ENCODE measurements at regions of chr17 and their contacts with region 1.

Region 1: DNA sequence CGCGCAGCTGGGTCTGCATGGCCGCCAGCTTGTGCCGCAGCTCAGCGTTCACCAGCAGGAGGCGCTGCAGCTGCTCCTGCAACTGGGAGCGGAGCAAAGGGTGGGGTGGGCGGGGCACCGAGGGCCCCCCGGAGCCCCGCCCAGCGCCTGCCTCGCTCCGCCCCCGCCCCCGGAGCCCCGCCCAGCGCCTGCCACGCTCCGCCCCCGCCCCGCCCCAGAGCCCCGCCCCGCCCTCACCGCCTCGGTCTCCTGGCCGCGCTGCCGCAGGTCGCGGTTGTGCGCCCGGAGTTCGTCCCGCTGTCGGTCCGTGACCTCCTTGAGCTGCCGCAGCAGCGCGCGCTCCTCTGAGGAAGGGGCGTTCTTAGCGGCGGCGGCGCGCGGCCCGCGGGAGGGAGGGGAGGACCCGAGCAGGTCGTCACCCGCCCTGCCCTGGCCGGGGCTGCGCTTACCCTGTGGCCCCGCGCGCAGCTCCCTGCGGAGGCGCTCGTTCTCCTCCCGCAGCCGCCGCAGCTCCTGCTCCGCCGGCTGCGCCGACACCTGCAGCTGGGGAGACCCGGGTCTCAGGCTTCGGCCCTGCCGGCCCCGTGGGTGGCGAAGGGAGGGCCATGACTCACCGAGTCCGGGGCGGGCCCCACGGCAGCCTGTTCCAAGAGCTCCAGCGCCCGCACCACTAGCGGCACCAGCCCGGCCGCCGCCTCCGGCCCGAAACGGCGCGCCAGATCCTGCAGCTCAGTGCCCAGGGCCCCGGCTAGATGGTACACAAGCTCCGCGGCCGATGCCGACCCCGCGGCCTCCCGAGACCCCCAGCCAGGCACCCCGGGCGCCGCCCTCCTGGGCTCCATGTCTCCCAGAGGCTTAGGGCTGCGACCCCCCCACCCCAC is 463 bp downstream of the RILP start:
- DNase-seq: peak; percentile 90 to 98 (median 93)
- ATAC-seq: peak; percentile 76
- H3K4me3 ChIP-seq: peak overlapping the region; percentile 34 to 70
- H3K4me3 Mint-ChIP-seq: peak overlapping the region; percentile 74
- H3K27ac ChIP-seq: peak overlapping the region in 1 of 2 experiments; percentile 44
- H3K27ac Mint-ChIP-seq: peak overlapping the region; percentile 49
- H3K4me1 ChIP-seq: peaks cover 16% of the 10 kb centered on the region
- H3K4me1 Mint-ChIP-seq: peaks cover 14% of the 10 kb centered on the region
- H3K27me3 ChIP-seq: no peaks in the 10 kb centered on the region
- H3K27me3 Mint-ChIP-seq: no peaks in the 10 kb centered on the region
- CTCF ChIP-seq: peak; percentile 71

Region 2: DNA sequence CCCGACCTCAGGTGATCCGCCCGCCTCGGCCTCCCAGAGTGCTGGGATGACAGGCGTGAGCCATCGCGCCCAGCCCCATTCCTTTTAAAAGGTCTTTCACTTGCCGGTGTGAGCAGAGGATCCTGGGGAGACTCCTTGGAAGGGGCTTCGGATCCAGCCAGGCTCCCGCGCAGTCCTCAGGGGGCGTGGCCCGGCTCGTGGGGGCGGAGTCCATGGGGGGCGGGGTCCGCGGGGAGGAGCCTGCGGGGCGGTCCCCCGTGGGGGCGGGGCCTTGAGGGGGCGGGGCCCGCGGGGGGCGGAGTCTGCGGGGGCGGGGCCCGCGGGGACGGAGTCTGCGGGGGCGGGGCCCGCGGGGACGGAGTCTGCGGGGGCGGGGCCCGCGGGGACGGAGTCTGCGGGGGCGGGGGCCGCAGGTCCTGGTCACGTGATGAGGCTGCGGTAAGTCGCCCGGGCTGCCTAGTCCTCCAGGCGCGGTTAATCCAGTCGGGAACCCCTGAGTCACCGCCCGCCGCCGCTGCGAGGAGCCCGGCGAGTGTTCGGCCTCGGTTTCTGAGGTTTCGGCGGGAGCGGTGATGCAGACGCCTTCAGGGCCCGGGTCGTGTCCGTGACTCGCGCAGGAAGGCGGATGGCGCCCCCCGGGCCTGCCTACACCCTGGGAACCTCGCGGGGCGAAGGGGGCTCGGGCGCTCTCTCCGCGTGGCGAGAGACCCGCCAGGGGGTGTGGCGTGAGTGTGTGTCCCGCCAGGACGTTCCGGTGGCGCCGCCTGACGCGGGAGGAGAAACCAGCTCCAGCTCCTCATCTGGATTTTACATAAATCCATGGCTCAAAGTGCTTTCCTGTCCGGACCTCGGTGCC is 445.9 kb before region 1 on chr17:
- CTCF ChIA-PET with region 1: no interaction called
- POLR2A ChIA-PET with region 1: no interaction called
- intact Hi-C with region 1: loop called in 1 of 2 experiments (anchors 5 kb)
- DNase-seq: peak; percentile 30 to 78 (median 52)
- ATAC-seq: peak; percentile 66
- H3K4me3 ChIP-seq: peak overlapping the region in 1 of 2 experiments; percentile 35
- H3K4me3 Mint-ChIP-seq: peak overlapping the region; percentile 5
- H3K27ac ChIP-seq: no peak overlapping the region
- H3K27ac Mint-ChIP-seq: no peak overlapping the region
- H3K4me1 ChIP-seq: peaks cover 48% of the 10 kb centered on the region
- H3K4me1 Mint-ChIP-seq: peaks cover 34% of the 10 kb centered on the region
- H3K27me3 ChIP-seq: no peaks in the 10 kb centered on the region
- H3K27me3 Mint-ChIP-seq: no peaks in the 10 kb centered on the region
- CTCF ChIP-seq: no peak

Region 3: DNA sequence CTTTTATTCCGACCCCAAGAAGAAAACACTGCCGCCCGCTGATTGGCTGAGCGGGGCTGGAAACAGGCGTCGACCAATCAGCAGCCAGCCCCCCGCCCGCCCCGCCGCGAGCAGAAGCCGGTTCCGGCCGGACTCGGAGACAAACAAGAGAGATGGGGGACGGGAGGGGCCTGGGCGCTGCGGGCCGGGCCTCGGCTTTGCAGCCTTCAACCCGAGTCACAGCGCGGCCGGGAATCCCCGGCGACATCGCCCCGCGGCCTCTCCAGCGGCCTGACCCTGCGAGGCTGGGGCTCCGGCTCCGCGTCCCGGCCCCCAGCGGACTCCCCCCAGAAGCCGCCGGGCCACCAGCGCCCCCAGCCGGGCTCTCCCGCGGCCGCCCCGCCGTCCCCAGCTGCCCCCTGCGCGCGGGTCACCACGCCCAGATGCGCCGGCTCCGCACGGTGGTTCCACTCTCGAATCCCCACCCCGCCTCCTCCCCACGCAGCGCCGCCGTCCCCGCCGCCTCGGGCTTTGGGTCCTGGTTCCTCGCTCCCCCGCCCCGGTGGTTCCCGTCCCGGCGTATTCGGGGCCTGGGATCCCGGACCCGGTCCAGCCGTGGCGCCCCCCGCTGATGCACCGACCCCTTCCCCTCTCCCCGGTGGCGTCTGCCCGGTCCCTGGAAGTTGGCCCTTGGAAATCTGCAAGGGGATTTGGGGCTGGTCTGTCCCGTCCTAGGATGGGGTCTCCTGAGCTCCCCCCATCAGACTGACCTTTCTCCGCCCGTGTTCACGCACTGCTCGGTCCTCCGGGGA is 20.2 kb before region 1 on chr17:
- CTCF ChIA-PET with region 1: interaction called, 13 read pairs
- POLR2A ChIA-PET with region 1: interaction called, 22 read pairs
- intact Hi-C with region 1: loop called in 1 of 2 experiments (anchors 1 kb)
- DNase-seq: peak; percentile 81 to 95 (median 91)
- ATAC-seq: peak; percentile 70
- H3K4me3 ChIP-seq: peak overlapping the region; percentile 70 to 90
- H3K4me3 Mint-ChIP-seq: peak overlapping the region; percentile 95
- H3K27ac ChIP-seq: peak overlapping the region; percentile 43 to 79
- H3K27ac Mint-ChIP-seq: peak overlapping the region; percentile 90
- H3K4me1 ChIP-seq: peaks cover 20% of the 10 kb centered on the region
- H3K4me1 Mint-ChIP-seq: peaks cover 19% of the 10 kb centered on the region
- H3K27me3 ChIP-seq: no peaks in the 10 kb centered on the region
- H3K27me3 Mint-ChIP-seq: no peaks in the 10 kb centered on the region
- CTCF ChIP-seq: no peak

Region 4: GRCh38 chr17:1673041-1673785 is 24.0 kb after region 1 on chr17:
- CTCF ChIA-PET with region 1: interaction called, 10 read pairs
- POLR2A ChIA-PET with region 1: interaction called, 5 read pairs
- intact Hi-C with region 1: no loop called
- DNase-seq: peak in 4 of 9 experiments; percentile 15 to 43 (median 38)
- ATAC-seq: peak; percentile 42
- H3K4me3 ChIP-seq: no peak overlapping the region
- H3K4me3 Mint-ChIP-seq: no peak overlapping the region
- H3K27ac ChIP-seq: no peak overlapping the region
- H3K27ac Mint-ChIP-seq: no peak overlapping the region
- H3K4me1 ChIP-seq: no peaks in the 10 kb centered on the region
- H3K4me1 Mint-ChIP-seq: peaks cover 29% of the 10 kb centered on the region
- H3K27me3 ChIP-seq: no peaks in the 10 kb centered on the region
- H3K27me3 Mint-ChIP-seq: no peaks in the 10 kb centered on the region
- CTCF ChIP-seq: no peak

Region 5: DNA sequence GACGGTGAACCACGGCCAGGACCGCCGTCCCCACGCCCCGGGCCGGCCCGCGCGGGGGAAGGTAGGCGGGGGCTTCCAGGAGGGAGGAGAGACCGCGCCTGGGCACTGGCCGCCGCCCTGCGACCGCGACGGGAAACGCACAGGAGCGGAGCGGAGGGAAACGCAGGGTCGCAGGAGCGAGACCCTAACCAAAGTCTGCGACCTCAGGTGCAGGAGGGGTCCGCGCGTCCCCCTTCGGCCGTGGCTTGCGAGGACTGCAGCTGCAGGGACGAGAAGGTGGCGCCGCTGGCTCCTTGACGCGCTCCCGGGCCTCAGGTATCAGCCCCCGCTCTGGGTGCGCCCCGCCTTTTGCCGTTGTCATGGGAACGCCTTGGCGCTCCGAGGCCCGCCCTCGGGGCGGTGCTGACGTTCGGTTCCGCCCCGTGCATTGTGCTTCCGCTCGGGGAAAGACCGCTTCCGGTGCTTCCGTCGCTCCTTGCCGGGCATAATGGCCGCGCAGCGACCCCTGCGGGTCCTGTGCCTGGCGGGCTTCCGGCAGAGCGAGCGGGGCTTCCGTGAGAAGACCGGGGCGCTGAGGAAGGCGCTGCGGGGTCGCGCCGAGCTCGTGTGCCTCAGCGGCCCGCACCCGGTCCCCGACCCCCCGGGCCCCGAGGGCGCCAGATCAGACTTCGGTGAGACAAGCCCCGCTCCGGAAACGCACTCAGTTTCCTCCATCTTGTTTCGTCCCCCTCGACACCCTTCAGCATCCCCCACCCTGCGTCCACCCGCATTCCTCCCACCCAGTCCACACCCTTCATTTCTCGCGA is 392.6 kb after region 1 on chr17 and contains the start of gene OVCA2:
- CTCF ChIA-PET with region 1: no interaction called
- POLR2A ChIA-PET with region 1: no interaction called
- intact Hi-C with region 1: loop called (anchors 5 kb)
- DNase-seq: peak; percentile 96 to 99 (median 97)
- ATAC-seq: peak; percentile 94
- H3K4me3 ChIP-seq: peak within 1 kb of the TSS; percentile 74 to 75
- H3K4me3 Mint-ChIP-seq: peak within 1 kb of the TSS; percentile 85
- H3K27ac ChIP-seq: peak within 1 kb of the TSS; percentile 77 to 89
- H3K27ac Mint-ChIP-seq: peak within 1 kb of the TSS; percentile 92
- H3K4me1 ChIP-seq: peaks cover 15% of the 10 kb centered on the region
- H3K4me1 Mint-ChIP-seq: peaks cover 20% of the 10 kb centered on the region
- H3K27me3 ChIP-seq: no peaks in the 10 kb centered on the region
- H3K27me3 Mint-ChIP-seq: no peaks in the 10 kb centered on the region
- CTCF ChIP-seq: peak; percentile 42
- total RNA-seq, gene OVCA2: 38.7 to 48.2 TPM

Measured in CD8-positive, alpha-beta T cell (primary cell).